Caco-2 (cell line): ENCODE measurements at regions of chr13 and their contacts with region 1.

Region 1: DNA sequence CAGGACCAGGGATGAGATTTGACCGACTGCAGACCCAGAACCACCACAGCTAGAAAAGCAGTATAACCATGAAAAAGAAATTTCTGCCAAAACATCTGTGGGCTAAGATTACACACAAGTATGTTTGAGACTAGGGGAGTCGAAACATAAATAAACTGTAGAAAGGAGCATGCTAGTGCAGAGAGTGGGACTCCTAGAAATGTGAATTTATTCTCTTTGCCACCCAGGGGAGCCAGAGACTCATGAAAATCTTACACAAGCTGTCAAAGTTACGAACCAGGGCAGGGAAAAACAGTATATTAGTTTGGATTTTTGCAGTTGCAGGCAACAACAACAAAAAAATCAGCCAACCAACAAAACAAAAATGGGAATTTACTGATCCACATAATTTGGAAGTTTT is 12.3 kb upstream of the HSPH1 start:
- DNase-seq: no peak
- H3K4me3 ChIP-seq: no peak overlapping the region
- H3K4me3 Mint-ChIP-seq: no peak overlapping the region
- H3K27ac Mint-ChIP-seq: peak overlapping the region; percentile 90
- H3K4me1 ChIP-seq: peaks cover 18% of the 10 kb centered on the region
- H3K4me1 Mint-ChIP-seq: peaks cover 24% of the 10 kb centered on the region
- H3K27me3 ChIP-seq: no peaks in the 10 kb centered on the region
- H3K27me3 Mint-ChIP-seq: no peaks in the 10 kb centered on the region
- CTCF ChIP-seq: peak; percentile 16 to 18

Region 2: DNA sequence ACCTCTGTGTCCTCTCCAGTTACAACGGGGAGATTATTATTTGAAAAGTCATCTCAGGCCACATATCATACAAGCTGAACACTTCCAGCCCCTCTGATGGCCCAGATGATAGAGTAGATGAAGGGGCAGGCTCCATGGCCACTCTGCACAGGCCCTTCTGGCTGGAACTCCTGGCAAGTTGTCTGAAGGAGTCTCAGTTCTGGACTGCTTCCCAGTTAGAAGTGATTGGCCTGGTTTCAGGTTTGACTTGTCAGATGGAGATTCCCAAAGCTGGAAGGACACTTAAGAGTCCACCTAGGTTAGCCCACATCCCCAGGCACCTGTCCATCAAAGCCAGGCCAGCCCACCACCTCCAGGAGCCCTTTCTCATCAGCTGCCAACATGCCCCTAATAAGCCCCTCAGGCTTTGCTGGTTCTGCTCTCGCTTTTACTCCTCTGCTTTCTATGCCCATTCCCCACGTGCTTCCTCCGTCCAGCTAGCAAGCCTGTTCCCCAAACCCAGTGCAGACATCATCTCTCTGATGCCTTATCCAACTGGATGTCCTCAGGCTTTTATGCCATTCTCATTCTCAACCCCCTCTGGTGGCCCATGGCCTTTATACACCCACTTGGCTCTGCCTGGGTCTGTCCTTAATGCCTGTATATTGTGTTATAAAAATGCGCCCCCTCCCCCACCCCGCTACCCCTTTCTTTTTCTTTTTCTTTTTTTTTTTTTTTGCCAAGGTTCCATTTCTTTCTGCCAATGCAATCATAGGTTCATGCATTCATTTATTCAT is 68.8 kb before region 1 on chr13:
- CTCF ChIA-PET with region 1: no interaction called
- POLR2A ChIA-PET with region 1: no interaction called
- intact Hi-C with region 1: no loop called
- DNase-seq: no peak
- H3K4me3 ChIP-seq: no peak overlapping the region
- H3K4me3 Mint-ChIP-seq: no peak overlapping the region
- H3K27ac Mint-ChIP-seq: no peak overlapping the region
- H3K4me1 ChIP-seq: no peaks in the 10 kb centered on the region
- H3K4me1 Mint-ChIP-seq: no peaks in the 10 kb centered on the region
- H3K27me3 ChIP-seq: no peaks in the 10 kb centered on the region; the same call in 1 of the 2 replicates
- H3K27me3 Mint-ChIP-seq: peaks cover 7% of the 10 kb centered on the region
- CTCF ChIP-seq: peak in 1 of 2 experiments; percentile 11

Region 3: DNA sequence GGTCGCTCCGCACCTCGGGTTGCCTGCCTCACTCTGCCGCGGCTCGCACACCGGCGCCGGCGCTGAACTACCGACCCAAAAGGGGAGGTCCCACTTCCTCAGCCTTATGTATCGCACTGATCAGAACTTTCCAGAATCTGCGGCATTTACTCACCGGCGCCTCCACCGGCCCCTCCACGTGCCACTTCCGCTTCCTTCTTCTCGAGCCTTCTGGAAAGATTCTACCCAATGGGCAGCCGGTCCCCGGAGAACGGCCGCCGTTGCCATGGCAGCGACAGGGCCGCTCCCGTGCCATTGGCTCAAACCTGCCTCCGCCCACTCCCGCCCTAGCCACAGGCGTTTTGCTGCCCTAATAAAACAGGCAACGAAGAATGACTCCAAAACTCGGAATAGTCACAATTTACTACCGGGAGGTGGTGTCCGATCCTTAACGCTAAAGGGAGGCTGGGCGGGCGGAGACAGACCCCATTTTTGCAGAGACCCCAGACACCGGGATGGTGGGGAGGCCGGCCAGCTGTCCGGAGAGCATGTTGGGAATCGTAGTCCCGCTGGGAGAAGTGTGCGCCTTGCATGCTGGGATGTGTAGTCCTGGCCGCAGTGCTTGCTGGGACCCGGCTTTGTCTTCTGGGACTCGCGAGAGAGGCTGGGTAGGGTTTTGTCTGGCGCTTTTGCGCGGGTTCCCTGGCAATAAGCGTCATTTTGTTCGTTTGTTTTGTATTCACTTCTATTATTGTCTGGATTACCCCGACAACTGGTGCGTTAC is 12.0 kb before region 1 on chr13 and contains the start of gene HSPH1:
- CTCF ChIA-PET with region 1: no interaction called
- POLR2A ChIA-PET with region 1: no interaction called
- intact Hi-C with region 1: loop called (anchors 1 kb)
- DNase-seq: peak; percentile 99
- H3K4me3 ChIP-seq: peak within 1 kb of the TSS; percentile 91
- H3K4me3 Mint-ChIP-seq: peak within 1 kb of the TSS; percentile 98
- H3K27ac Mint-ChIP-seq: peak within 1 kb of the TSS; percentile 97
- H3K4me1 ChIP-seq: peaks cover 18% of the 10 kb centered on the region; the same call in 1 of the 2 replicates
- H3K4me1 Mint-ChIP-seq: peaks cover 20% of the 10 kb centered on the region
- H3K27me3 ChIP-seq: no peaks in the 10 kb centered on the region
- H3K27me3 Mint-ChIP-seq: no peaks in the 10 kb centered on the region
- CTCF ChIP-seq: peak; percentile 43 to 45
- total RNA-seq, gene HSPH1: 141 and 151 TPM in 2 replicates

Region 4: DNA sequence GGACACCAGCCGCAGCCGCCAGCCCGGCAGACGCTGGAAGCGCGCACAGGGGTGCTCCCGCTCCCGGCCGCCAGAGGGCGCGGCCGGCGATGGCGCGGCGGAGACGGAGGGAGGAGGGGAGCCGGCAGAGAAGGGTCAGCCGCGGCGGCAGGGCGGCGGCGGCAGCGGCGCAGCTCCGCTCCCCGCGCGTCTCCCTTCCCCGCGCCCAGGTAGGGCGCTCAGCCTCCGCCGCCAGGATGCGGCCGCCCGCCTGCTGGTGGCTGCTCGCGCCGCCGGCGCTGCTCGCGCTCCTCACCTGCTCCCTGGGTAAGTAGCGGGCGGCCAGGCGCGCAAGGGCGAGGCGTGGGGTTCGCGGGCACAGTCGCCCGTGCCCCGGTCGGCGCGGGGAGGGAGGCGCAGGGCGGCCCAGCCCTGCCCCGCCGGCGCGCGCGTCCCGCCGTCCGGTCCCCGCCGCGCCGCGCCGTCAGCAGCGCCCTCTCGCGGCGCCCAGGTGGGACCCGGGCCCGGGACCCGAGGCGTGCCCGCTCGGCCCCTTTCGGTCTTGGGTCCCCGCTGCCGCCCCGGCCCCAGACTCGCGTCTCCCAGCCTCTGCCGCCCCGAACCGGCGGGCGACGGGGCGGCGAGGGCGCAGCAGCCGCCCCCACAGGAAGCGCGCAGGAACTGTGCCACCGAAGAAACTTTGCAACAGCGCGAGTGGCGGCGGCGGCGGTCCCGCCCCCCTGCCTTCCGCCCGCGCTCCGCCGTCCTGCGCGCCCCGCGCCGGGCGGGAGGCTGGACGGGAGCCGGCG is 26.0 kb after region 1 on chr13 and contains the start of gene B3GLCT:
- CTCF ChIA-PET with region 1: interaction called, 3 read pairs
- POLR2A ChIA-PET with region 1: no interaction called
- intact Hi-C with region 1: loop called (anchors 2 kb)
- DNase-seq: peak; percentile 79 to 94
- H3K4me3 ChIP-seq: peak within 1 kb of the TSS; percentile 77
- H3K4me3 Mint-ChIP-seq: peak within 1 kb of the TSS; percentile 77
- H3K27ac Mint-ChIP-seq: peak within 1 kb of the TSS; percentile 63
- H3K4me1 ChIP-seq: peaks cover 6% of the 10 kb centered on the region
- H3K4me1 Mint-ChIP-seq: peaks cover 14% of the 10 kb centered on the region
- H3K27me3 ChIP-seq: no peaks in the 10 kb centered on the region
- H3K27me3 Mint-ChIP-seq: no peaks in the 10 kb centered on the region
- CTCF ChIP-seq: peak; percentile 81 to 91
- total RNA-seq, gene B3GLCT: 4.5 TPM in 2 replicates

Region 5: DNA sequence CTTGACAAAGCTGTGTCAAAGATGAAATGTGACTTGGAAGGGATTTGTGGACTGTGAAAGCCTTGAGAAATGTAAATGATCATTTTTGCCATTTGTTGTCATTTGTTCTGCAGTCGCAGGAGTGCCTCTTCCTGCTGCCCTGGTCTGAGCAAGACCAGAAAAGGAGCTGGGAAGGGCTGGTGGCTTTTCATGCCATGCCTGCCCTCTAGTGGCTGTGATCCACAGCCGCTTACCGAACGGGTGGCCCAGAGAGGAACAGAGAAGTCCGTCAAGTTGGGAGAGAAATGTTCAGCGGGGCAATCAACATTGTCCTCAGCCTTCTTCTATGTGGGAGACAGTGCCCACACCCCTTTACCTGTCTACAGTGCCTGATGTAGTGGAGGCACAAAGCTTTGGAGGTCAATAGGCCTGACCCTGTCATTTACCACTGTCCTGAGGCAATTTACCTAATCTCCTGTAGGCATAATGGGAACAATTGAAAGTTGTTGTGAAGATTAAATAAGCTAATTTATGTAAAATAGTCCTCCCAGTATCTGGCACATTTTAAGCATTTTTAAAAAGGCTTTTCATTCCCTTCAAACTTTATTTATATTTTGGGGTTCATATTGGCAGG is 250.2 kb after region 1 on chr13:
- CTCF ChIA-PET with region 1: interaction called, 9 read pairs
- POLR2A ChIA-PET with region 1: no interaction called
- intact Hi-C with region 1: loop called (anchors 10 kb)
- DNase-seq: peak; percentile 82 to 83
- H3K4me3 ChIP-seq: no peak overlapping the region
- H3K4me3 Mint-ChIP-seq: no peak overlapping the region
- H3K27ac Mint-ChIP-seq: no peak overlapping the region
- H3K4me1 ChIP-seq: no peaks in the 10 kb centered on the region
- H3K4me1 Mint-ChIP-seq: no peaks in the 10 kb centered on the region
- H3K27me3 ChIP-seq: no peaks in the 10 kb centered on the region
- H3K27me3 Mint-ChIP-seq: peaks cover 10% of the 10 kb centered on the region
- CTCF ChIP-seq: peak; percentile 94 to 97

Region 6: GRCh38 chr13:31629085-31629780 is 455.2 kb after region 1 on chr13:
- CTCF ChIA-PET with region 1: no interaction called
- POLR2A ChIA-PET with region 1: no interaction called
- intact Hi-C with region 1: no loop called
- DNase-seq: no peak
- H3K4me3 ChIP-seq: no peak overlapping the region
- H3K4me3 Mint-ChIP-seq: no peak overlapping the region
- H3K27ac Mint-ChIP-seq: no peak overlapping the region
- H3K4me1 ChIP-seq: no peaks in the 10 kb centered on the region
- H3K4me1 Mint-ChIP-seq: no peaks in the 10 kb centered on the region
- H3K27me3 ChIP-seq: no peaks in the 10 kb centered on the region
- H3K27me3 Mint-ChIP-seq: no peaks in the 10 kb centered on the region
- CTCF ChIP-seq: no peak